ENCODE measurements at regions of chr21 and their contacts with region 1.

Region 1: DNA sequence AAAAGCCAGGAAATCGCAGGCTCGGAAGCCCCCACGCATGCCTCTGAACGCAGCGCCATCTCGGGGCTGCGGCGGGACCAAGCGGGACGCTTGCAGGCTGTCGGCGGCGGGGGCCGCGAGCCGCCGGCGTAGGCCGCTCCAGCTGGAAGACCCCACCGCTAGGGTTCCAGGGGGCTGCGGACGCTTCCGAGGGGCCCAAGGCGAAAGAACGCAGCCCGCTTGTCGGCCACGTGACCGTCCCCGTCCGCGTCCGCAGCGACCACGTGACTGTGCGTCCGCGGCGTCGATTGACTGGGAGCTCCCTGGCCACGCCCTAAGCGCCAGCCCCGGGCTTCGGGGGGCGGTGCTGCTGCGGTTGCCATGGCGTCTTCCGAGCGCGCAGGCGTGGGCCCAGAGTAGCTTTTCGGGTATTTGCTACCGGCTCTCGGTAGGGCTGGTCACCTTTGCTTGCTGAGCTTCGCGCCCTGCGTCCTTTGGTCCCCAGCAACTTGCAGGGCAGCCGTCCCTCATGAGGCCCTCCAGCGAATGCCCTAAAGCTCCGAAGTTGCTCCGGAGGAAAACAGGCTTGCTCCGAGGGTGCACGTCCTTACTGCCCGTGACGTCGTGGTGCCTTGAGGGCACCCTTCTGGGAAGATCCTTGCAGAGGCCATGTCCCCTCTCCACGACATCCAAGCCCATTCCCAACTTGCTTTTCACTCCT is 197.2 kb downstream of the DYRK1A start:
- DNase-seq: peak; percentile 96
- ATAC-seq: peak; percentile 96

Region 2: GRCh38 chr21:37257967-37258877 is 305.6 kb before region 1 on chr21:
- intact Hi-C with region 1: loop called (anchors 10 kb)
- DNase-seq: peak; percentile 68
- ATAC-seq: peak; percentile 75

Region 3: GRCh38 chr21:37366482-37367316 is 197.1 kb before region 1 on chr21 and contains the start of gene DYRK1A:
- intact Hi-C with region 1: loop called (anchors 5 kb)
- DNase-seq: peak; percentile 98
- ATAC-seq: peak; percentile 93
- total RNA-seq, gene DYRK1A: 62.7 TPM

Region 4: DNA sequence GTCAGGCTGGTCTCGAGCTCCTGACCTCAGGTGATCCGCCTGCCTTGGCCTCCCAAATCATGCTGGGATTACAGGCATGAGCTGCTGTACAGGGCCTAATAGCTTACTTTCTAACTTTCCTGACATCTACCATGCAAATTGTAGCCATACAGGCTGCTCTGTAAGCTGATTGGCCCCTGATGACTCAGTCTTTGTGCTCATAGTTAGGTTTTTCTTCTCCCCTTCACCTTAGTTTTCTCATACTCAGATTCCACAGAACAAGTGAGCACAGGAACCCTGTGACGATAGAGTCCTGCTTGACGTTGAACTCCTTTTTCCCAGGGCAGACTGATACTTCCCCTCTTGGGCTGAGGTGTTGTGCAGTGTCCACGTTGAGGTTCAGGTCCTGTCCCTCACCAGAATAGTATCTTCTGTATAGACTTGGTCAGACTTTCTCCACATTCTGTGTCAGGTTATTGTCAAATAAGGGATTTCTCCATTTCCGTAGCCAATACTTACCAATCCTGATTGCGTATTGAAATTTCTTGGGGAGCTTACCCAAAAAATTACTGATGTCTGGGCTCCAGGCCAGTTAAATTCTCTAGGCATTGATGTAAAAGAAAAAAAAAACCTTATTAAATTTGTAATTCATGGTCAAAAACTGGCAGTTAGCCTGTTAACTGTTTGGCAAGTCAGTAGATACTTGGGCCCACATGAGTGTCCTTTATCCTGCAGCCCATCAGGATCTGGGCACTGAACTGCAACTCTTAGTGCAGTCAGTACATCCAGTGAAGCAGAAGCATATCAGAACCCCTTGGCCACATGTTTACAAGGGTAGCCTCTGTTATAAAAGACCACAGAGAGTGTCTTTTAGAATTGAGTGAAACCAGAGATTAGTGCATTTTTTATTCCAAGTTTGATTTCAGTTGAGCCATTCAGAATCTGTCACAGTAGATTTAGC is 79.0 kb before region 1 on chr21:
- intact Hi-C with region 1: no loop called
- DNase-seq: no peak
- ATAC-seq: peak; percentile 73